ENCODE measurements at regions of chr20 and their contacts with region 1.

Region 1: DNA sequence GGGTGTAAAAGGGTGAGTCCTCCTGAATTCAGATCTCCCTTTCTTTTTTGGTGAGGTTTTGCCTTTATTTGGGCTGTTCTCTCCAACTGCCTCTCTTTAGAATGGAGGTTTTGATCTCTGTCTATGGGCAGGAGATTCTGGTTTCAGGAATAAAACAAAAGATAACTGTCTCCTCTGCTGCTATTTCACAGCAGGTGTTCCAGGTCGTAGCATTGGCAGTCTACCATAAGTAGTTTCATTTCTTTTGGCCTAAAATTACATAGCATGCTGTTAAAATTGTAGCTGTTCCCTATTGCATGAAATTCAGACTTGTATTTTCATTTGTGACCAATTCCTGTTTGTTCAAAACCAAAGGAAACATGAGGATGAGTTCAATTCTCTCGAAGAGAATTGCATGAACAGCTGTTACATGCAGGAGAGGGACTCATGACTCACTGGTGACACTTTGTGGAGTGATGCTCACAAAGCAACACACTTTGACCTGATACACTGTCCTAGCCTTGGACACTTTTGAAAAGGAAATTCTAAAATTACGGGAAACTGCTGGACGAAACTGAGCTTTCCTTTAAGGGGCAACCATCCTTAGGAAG is 76.8 kb upstream of the SIRPG start:
- DNase-seq: no peak
- ATAC-seq: peak; percentile 63
- H3K4me3 ChIP-seq: no peak overlapping the region
- H3K27ac ChIP-seq: no peak overlapping the region
- H3K4me1 ChIP-seq: no peaks in the 10 kb centered on the region
- H3K27me3 ChIP-seq: peaks cover 6% of the 10 kb centered on the region; the same call in 1 of the 2 replicates
- CTCF ChIP-seq: 0 out of 6 replicates have a peak, but pooled peaks of 1 of the 3 experiments have one; percentile 31
- POLR2A ChIP-seq: no peak
- RAD21 ChIP-seq: peak; percentile 64

Region 2: GRCh38 chr20:1535420-1536175 is 198.8 kb before region 1 on chr20:
- CTCF ChIA-PET with region 1: no interaction called
- POLR2A ChIA-PET with region 1: no interaction called
- RAD21 ChIA-PET with region 1: no interaction called
- intact Hi-C with region 1: loop called (anchors 10 kb)
- DNase-seq: no peak
- ATAC-seq: no peak
- H3K4me3 ChIP-seq: no peak overlapping the region
- H3K27ac ChIP-seq: no peak overlapping the region
- H3K4me1 ChIP-seq: no peaks in the 10 kb centered on the region
- H3K27me3 ChIP-seq: no peaks in the 10 kb centered on the region
- CTCF ChIP-seq: no peak
- POLR2A ChIP-seq: no peak
- RAD21 ChIP-seq: no peak